Mucosa of descending colon (tissue), 3 donors: ENCODE measurements at regions of chr9 and their contacts with region 1.

Region 1: DNA sequence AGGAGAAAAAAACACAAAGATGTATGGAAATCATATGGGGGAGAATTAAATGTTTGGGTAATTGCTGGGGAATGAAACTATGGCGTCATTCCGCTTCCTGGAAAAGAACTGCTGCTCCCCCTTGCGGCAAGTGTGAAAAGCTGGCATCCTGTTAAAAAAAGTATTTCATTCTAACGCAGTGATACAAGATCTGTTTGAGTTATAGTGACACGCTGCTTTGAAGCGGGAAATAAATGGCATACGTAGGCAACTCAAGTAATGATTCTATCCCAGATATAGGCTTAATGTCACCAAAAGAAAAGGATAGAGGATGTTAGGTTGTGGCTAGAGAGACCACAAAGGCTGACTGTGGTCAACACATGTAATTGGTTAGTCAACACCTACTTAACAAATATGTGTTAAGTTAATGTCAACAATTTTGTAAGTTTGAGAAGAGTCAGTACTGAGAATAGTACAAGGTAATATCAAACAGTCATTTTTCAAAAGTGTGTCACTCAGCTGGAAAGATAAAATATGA is 70.2 kb upstream of the ALDH1A1 start:
- DNase-seq: peak in 2 of 3 donors; percentile 40 to 56
- ATAC-seq: peak; percentile 79
- H3K4me3 ChIP-seq: no peak overlapping the region
- H3K4me1 ChIP-seq: no peaks in the 10 kb centered on the region
- CTCF ChIP-seq: peak; percentile 59

Region 2: GRCh38 chr9:72864327-72864726 is 158.8 kb before region 1 on chr9:
- intact Hi-C with region 1: loop called in 1 of 2 experiments (anchors 10 kb)
- DNase-seq: no peak
- ATAC-seq: no peak
- H3K4me3 ChIP-seq: no peak overlapping the region
- H3K4me1 ChIP-seq: no peaks in the 10 kb centered on the region
- CTCF ChIP-seq: no peak

Region 3: GRCh38 chr9:72871685-72872084 is 151.4 kb before region 1 on chr9:
- intact Hi-C with region 1: loop called (anchors 2 to 10 kb)
- DNase-seq: peak in 1 of 3 donors; percentile 18
- ATAC-seq: peak; percentile 40
- H3K4me3 ChIP-seq: no peak overlapping the region
- H3K4me1 ChIP-seq: peaks cover 4% of the 10 kb centered on the region
- CTCF ChIP-seq: no peak

Region 4: DNA sequence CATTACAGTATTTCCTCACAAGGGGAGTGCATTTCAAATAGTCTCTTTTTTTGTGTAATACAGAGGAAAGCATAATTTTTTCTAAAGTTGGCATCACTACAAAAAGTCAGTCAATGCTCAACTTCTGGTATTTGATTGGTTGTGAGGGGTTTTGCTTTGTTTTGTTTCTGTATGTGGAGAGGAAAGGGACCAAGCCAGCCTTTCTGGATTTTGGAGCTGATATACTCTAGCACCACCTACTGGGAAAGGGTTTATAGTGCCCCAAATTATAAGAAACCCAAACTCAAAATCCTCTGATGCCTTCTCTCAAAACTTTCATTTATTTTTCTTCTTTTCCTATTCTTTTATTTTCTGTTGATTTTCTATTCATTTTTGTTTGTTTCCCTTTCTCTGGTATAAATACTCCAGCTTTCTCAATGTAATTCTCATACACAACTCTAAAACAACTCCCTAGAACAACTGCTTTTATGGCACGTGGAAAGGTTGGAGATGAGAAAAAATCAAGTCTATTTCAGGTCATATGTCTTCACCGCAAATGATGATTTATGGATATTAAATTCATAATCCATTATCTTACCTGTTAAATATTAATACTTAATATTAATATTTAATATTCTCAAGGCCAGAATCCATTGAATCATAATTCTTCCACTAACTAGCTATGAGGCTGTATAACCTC is 59.0 kb after region 1 on chr9:
- intact Hi-C with region 1: loop called in 1 of 2 experiments (anchors 2 kb)
- DNase-seq: peak in 1 of 3 donors; percentile 47
- ATAC-seq: peak; percentile 55
- H3K4me3 ChIP-seq: no peak overlapping the region
- H3K4me1 ChIP-seq: peaks cover 12% of the 10 kb centered on the region
- CTCF ChIP-seq: peak; percentile 41